ENCODE measurements at regions of chr1 and their contacts with region 1.

Region 1: GRCh38 chr1:209827384-209828262 is at the start of gene UTP25:
- DNase-seq: peak; percentile 85 to 95 (median 91)
- H3K4me3 ChIP-seq: peak within 1 kb of the TSS; percentile 54 to 100 (median 88)
- H3K27ac ChIP-seq: peak within 1 kb of the TSS in 52 of 59 donors; percentile 23 to 91 (median 73)
- H3K27me3 ChIP-seq: peaks cover 0 to 5% (median 0%) of the 10 kb centered on the region in 45 donors
- CTCF ChIP-seq: peak; percentile 72 to 95 (median 88)
- total RNA-seq, gene UTP25: 6.2 to 14.2 (median 10.6) TPM

Region 2: GRCh38 chr1:209576798-209577197 is 250.8 kb before region 1 on chr1:
- intact Hi-C with region 1: loop called in 1 of 2 experiments (anchors 5 kb)
- DNase-seq: peak; percentile 68 to 88 (median 82)
- H3K4me3 ChIP-seq: no peak overlapping the region
- H3K27ac ChIP-seq: peak overlapping the region in 1 of 59 donors; percentile 3
- H3K27me3 ChIP-seq: peaks cover 0 to 21% (median 0%) of the 10 kb centered on the region in 45 donors
- CTCF ChIP-seq: peak; percentile 73 to 99 (median 93)

Region 3: GRCh38 chr1:209627732-209628196 is 199.9 kb before region 1 on chr1:
- intact Hi-C with region 1: no loop called
- DNase-seq: peak; percentile 72 to 91 (median 84)
- H3K4me3 ChIP-seq: peak overlapping the region in 15 of 59 donors; percentile 3 to 45 (median 26)
- H3K27ac ChIP-seq: peak overlapping the region in 21 of 59 donors; percentile 2 to 70 (median 44)
- H3K27me3 ChIP-seq: no peaks in the 10 kb centered on the region
- CTCF ChIP-seq: peak; percentile 89 to 100 (median 99)

Region 4: DNA sequence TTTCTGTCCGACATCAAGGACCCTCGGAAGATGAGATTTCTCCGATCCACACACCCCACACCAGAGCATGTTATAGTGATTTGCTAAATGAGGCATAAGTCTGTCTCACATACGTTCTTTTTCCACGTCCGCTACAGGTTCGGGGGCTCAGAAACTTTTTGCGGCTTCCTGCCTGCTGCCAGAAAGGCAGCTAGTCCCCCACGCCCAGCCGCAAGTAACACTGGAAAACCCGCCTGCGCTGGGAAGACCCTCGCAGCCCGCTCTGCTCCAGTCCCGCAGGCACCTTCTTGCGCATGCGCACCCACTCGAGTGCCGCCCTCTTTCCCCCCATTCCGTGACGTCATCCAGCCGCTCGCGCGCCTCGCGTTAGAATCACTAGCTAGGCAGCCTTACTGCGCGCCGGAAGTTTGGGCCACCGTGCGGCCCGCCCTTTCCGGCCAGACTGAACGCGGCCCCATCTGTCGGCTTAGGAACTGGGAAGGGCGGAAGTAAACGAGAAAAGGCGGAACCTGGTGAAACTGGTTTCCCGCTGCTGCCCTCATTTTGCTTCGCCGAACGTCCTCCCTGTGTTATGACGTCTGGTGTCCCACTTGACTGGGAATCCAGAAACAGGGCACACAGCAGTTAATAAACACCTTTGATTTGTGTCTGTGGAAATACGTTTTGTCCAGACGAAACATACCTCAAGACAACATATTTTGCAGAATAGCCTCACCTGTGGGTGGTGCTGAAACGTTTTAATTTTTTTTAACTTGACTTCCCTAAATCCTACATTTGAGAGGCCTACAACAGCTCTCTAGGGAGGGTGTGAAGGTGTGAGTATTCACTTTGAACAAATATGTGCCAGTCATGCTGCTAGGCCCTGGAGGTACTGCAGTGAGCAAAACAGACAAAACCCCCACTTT is 43.1 kb before region 1 on chr1 and contains the start of gene C1orf74:
- intact Hi-C with region 1: loop called (anchors 2 to 5 kb)
- DNase-seq: peak; percentile 97 to 99 (median 99)
- H3K4me3 ChIP-seq: peak within 1 kb of the TSS; percentile 50 to 97 (median 81)
- H3K27ac ChIP-seq: peak within 1 kb of the TSS; percentile 48 to 95 (median 83)
- H3K27me3 ChIP-seq: peaks cover 0 to 30% (median 0%) of the 10 kb centered on the region in 45 donors
- CTCF ChIP-seq: peak in 46 of 56 donors; percentile 9 to 67 (median 36)
- total RNA-seq, gene C1orf74: 1.4 to 4.1 (median 2.8) TPM

Region 5: GRCh38 chr1:209875515-209875914 is 47.9 kb after region 1 on chr1:
- intact Hi-C with region 1: no loop called
- DNase-seq: peak in 1 of 10 donors; percentile 54
- H3K4me3 ChIP-seq: peak overlapping the region in 20 of 59 donors; percentile 4 to 42 (median 18)
- H3K27ac ChIP-seq: peak overlapping the region in 50 of 59 donors; percentile 1 to 99 (median 68)
- H3K27me3 ChIP-seq: no peaks in the 10 kb centered on the region
- CTCF ChIP-seq: peak in 45 of 56 donors; percentile 10 to 61 (median 32)

Measured in dorsolateral prefrontal cortex (tissue), 120 donors.